CD8-positive, alpha-beta T cell (primary cell): ENCODE measurements at regions of chr17 and their contacts with region 1.

Region 1: GRCh38 chr17:58249270-58250133 is 11.1 kb downstream of the LPO start:
- DNase-seq: peak; percentile 51 to 88 (median 74)
- ATAC-seq: peak; percentile 98
- H3K4me3 ChIP-seq: peak overlapping the region; percentile 53 to 59
- H3K4me3 Mint-ChIP-seq: peak overlapping the region; percentile 84
- H3K27ac ChIP-seq: no peak overlapping the region
- H3K27ac Mint-ChIP-seq: no peak overlapping the region
- H3K4me1 ChIP-seq: peaks cover 17% of the 10 kb centered on the region
- H3K4me1 Mint-ChIP-seq: peaks cover 17% of the 10 kb centered on the region
- H3K27me3 ChIP-seq: peaks cover 0 to 5% of the 10 kb centered on the region in 2 experiments
- H3K27me3 Mint-ChIP-seq: peaks cover 8% of the 10 kb centered on the region
- CTCF ChIP-seq: peak; percentile 98

Region 2: GRCh38 chr17:58121925-58122324 is 127.6 kb before region 1 on chr17:
- CTCF ChIA-PET with region 1: interaction called, 3 read pairs
- POLR2A ChIA-PET with region 1: no interaction called
- intact Hi-C with region 1: loop called (anchors 2 to 10 kb)
- DNase-seq: peak in 8 of 9 experiments; percentile 24 to 81 (median 49)
- ATAC-seq: peak; percentile 74
- H3K4me3 ChIP-seq: no peak overlapping the region
- H3K4me3 Mint-ChIP-seq: no peak overlapping the region
- H3K27ac ChIP-seq: no peak overlapping the region
- H3K27ac Mint-ChIP-seq: no peak overlapping the region
- H3K4me1 ChIP-seq: peaks cover 5% of the 10 kb centered on the region
- H3K4me1 Mint-ChIP-seq: peaks cover 12% of the 10 kb centered on the region
- H3K27me3 ChIP-seq: no peaks in the 10 kb centered on the region
- H3K27me3 Mint-ChIP-seq: peaks cover 12% of the 10 kb centered on the region
- CTCF ChIP-seq: peak; percentile 51

Region 3: DNA sequence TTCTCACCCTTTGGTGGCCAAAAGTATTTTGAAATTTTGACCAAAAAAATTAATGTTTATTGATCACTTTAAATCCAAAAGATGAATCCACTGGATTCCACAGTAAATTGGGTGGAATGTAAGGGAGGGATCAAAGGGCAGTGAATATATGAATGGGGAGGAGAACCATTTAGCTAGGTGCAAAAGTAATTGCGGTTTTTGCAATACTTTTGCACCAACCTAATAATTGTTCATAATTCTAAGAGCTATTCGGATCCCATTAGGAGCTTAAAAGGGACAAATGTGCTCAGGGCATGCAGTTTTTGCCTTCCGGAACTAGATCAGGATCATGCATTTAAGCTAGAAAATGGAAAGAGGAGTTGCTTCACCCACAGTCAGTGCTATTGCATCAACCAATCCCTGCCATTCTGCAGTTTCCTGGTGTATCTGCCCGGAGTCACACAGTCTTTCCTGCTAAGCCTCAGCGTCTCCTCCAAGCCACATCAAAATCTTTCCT is 11.3 kb before region 1 on chr17 and contains the start of gene LPO:
- CTCF ChIA-PET with region 1: interaction called, 26 read pairs
- POLR2A ChIA-PET with region 1: interaction called, 3 read pairs
- intact Hi-C with region 1: no loop called
- DNase-seq: no peak
- ATAC-seq: no peak
- H3K4me3 ChIP-seq: no peak within 1 kb of the TSS
- H3K4me3 Mint-ChIP-seq: no peak within 1 kb of the TSS
- H3K27ac ChIP-seq: no peak within 1 kb of the TSS
- H3K27ac Mint-ChIP-seq: no peak within 1 kb of the TSS
- H3K4me1 ChIP-seq: no peaks in the 10 kb centered on the region
- H3K4me1 Mint-ChIP-seq: no peaks in the 10 kb centered on the region
- H3K27me3 ChIP-seq: peaks cover 0 to 2% of the 10 kb centered on the region in 2 experiments
- H3K27me3 Mint-ChIP-seq: peaks cover 39% of the 10 kb centered on the region
- CTCF ChIP-seq: no peak
- total RNA-seq, gene LPO: not detected

Region 4: DNA sequence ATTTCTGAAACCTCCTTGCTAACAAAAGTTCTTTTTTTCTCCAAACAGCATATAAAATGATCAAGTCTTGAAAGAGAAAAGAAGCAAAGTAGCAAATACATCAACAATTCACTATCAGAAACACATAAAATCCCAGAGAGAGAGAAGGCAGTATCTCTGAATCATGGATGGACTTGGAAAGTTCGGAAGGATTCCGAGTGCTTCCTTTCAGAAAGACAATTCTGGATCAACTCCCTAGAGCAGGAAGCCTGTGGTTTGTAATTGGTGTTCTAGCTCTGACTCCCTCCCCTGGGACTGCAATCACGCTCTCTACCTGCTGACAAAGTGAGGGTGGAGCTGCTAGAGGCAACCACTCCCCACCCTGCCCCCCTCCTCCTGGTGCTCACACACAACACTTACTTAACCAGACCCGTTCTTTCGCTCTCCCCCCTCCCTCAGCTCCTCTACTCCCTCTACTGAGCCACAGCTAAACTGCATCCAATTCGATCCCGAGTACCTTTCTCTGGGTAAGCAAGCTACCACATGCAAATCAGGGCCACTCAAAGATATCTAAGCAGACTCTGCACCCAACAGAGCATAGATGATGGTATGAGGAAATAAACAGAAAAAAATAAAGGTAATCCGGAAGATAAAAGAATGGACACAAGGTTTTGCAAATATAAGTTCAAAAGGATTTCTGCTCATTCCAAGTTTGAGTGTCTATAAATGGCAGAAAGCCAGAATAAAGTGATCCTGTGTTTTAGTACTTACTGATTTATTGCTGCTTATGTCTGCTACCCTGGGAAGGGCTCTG is 168.0 kb after region 1 on chr17 and contains the start of gene RNF43:
- CTCF ChIA-PET with region 1: interaction called, 13 read pairs
- POLR2A ChIA-PET with region 1: no interaction called
- intact Hi-C with region 1: loop called in 1 of 2 experiments (anchors 1 kb)
- DNase-seq: peak; percentile 70 to 96 (median 87)
- ATAC-seq: peak; percentile 100
- H3K4me3 ChIP-seq: no peak within 1 kb of the TSS
- H3K4me3 Mint-ChIP-seq: no peak within 1 kb of the TSS
- H3K27ac ChIP-seq: peak within 1 kb of the TSS in 1 of 2 experiments; percentile 47
- H3K27ac Mint-ChIP-seq: peak within 1 kb of the TSS; percentile 3
- H3K4me1 ChIP-seq: peaks cover 15% of the 10 kb centered on the region
- H3K4me1 Mint-ChIP-seq: peaks cover 17% of the 10 kb centered on the region
- H3K27me3 ChIP-seq: no peaks in the 10 kb centered on the region
- H3K27me3 Mint-ChIP-seq: no peaks in the 10 kb centered on the region
- CTCF ChIP-seq: peak; percentile 75
- total RNA-seq, gene RNF43: 0.61 to 1.0 TPM

Region 5: GRCh38 chr17:58487589-58488427 is 238.3 kb after region 1 on chr17 and contains the start of gene HSF5:
- CTCF ChIA-PET with region 1: interaction called, 3 read pairs
- POLR2A ChIA-PET with region 1: interaction called, 3 read pairs
- intact Hi-C with region 1: loop called (anchors 1 to 2 kb)
- DNase-seq: peak; percentile 52 to 89 (median 76)
- ATAC-seq: peak; percentile 94
- H3K4me3 ChIP-seq: peak within 1 kb of the TSS; percentile 29 to 37
- H3K4me3 Mint-ChIP-seq: peak within 1 kb of the TSS; percentile 69
- H3K27ac ChIP-seq: peak within 1 kb of the TSS; percentile 22 to 40
- H3K27ac Mint-ChIP-seq: peak within 1 kb of the TSS; percentile 70
- H3K4me1 ChIP-seq: peaks cover 14% of the 10 kb centered on the region
- H3K4me1 Mint-ChIP-seq: peaks cover 16% of the 10 kb centered on the region
- H3K27me3 ChIP-seq: no peaks in the 10 kb centered on the region
- H3K27me3 Mint-ChIP-seq: no peaks in the 10 kb centered on the region
- CTCF ChIP-seq: peak; percentile 68
- total RNA-seq, gene HSF5: 1.1 to 1.6 TPM